ENCODE measurements at regions of chr11 and their contacts with region 1.

Region 1: DNA sequence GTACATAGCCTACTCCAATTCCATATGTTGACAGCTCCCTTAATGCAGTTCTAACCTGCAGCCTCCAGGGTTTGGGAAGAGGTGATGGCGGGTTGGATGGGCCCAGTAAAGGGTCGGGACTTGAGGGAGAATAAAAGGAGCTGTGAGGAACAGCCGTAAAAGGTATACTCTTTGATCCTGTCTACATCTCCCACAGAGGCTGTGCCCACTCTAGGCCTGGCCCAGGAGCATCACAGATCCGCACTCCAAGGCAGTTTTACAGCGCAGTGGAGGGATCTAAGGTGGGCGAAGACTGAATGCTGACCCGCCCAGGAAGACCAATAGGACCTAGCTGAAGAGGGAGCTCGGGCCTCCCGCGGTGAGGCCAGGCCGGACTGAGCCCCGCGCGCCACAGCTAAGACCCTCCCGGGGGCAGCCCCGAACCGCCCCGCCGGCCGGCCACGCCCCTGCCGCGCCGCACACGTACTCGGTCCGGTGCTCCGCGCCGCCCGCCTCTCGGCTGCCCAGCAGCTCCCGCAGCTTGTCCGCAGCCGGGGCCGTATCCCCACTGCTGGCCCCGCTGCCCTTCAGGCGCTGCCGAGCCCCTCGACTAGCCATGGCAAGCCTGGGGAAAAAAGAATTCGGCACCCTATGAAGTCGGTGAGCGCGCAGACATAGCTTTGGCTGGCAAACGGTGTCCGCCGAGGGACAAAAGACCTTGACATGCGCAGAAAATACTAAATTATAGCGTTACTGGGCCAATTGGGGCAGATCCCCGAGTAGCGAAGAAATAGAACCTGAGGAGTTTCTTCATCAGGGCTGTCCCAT is at the start of gene ALG9:
- DNase-seq: peak; percentile 94
- ATAC-seq: peak; percentile 87
- H3K4me3 Mint-ChIP-seq: peak within 1 kb of the TSS; percentile 95
- H3K27ac Mint-ChIP-seq: peak within 1 kb of the TSS; percentile 90
- H3K4me1 Mint-ChIP-seq: peaks cover 26% of the 10 kb centered on the region
- H3K27me3 Mint-ChIP-seq: no peaks in the 10 kb centered on the region
- total RNA-seq, gene ALG9: 30.4 to 41.2 TPM

Region 2: GRCh38 chr11:111766093-111766833 is 104.8 kb before region 1 on chr11 and contains the start of gene PPP2R1B:
- CTCF ChIA-PET with region 1: interaction called, 7 read pairs
- POLR2A ChIA-PET with region 1: interaction called, 3 read pairs
- intact Hi-C with region 1: loop called in 1 of 2 experiments (anchors 1 kb)
- DNase-seq: peak; percentile 85
- ATAC-seq: peak; percentile 95
- H3K4me3 Mint-ChIP-seq: peak within 1 kb of the TSS; percentile 85
- H3K27ac Mint-ChIP-seq: peak within 1 kb of the TSS; percentile 98
- H3K4me1 Mint-ChIP-seq: peaks cover 32% of the 10 kb centered on the region
- H3K27me3 Mint-ChIP-seq: no peaks in the 10 kb centered on the region
- total RNA-seq, gene PPP2R1B: 39.1 to 53.9 TPM

Region 3: DNA sequence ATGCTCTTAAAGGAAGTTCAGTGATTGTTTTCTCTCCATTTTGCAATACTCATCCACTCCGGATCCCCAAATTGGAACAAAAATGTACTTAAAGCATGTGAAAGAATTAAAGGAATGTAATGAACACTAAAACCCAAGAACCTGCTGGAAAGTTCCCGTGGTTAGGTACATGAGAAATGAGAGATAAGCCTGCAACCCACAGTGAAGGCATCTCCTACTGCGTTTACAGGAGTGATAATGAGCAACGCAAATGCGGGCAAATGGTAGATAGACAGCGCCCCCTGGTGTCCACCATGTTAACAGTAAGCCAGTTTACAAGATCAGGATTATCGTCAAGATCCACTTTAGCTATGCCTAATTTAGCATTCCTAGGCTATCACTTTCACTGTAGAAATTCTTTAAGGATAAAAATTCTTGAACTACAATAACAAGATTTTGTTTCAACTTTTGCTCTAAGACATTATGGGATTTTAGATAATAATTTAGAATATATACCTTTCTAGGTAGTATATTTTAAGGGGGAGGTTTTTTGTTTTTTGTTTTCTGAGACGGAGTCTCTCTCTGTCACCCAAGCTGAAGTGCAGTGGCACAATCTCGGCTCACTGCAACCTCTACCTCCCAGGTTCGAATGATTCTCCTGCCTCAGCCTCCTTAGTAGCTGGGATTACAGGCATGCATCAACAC is 29.6 kb before region 1 on chr11:
- CTCF ChIA-PET with region 1: interaction called, 19 read pairs
- POLR2A ChIA-PET with region 1: no interaction called
- intact Hi-C with region 1: no loop called
- DNase-seq: peak; percentile 94
- ATAC-seq: peak; percentile 95
- H3K4me3 Mint-ChIP-seq: no peak overlapping the region
- H3K27ac Mint-ChIP-seq: no peak overlapping the region
- H3K4me1 Mint-ChIP-seq: peaks cover 9% of the 10 kb centered on the region
- H3K27me3 Mint-ChIP-seq: no peaks in the 10 kb centered on the region

Region 4: GRCh38 chr11:111982019-111982464 is 111.0 kb after region 1 on chr11:
- CTCF ChIA-PET with region 1: interaction called, 11 read pairs
- POLR2A ChIA-PET with region 1: no interaction called
- intact Hi-C with region 1: loop called in 1 of 2 experiments (anchors 5 kb)
- DNase-seq: peak; percentile 78
- ATAC-seq: peak; percentile 88
- H3K4me3 Mint-ChIP-seq: no peak overlapping the region
- H3K27ac Mint-ChIP-seq: no peak overlapping the region
- H3K4me1 Mint-ChIP-seq: peaks cover 7% of the 10 kb centered on the region
- H3K27me3 Mint-ChIP-seq: peaks cover 22% of the 10 kb centered on the region

Region 5: GRCh38 chr11:112024773-112025678 is 153.9 kb after region 1 on chr11 and contains the start of gene DLAT:
- CTCF ChIA-PET with region 1: no interaction called
- POLR2A ChIA-PET with region 1: interaction called, 3 read pairs
- intact Hi-C with region 1: loop called (anchors 1 to 2 kb)
- DNase-seq: peak; percentile 93
- ATAC-seq: peak; percentile 90
- H3K4me3 Mint-ChIP-seq: peak within 1 kb of the TSS; percentile 96
- H3K27ac Mint-ChIP-seq: peak within 1 kb of the TSS; percentile 100
- H3K4me1 Mint-ChIP-seq: peaks cover 19% of the 10 kb centered on the region
- H3K27me3 Mint-ChIP-seq: no peaks in the 10 kb centered on the region
- total RNA-seq, gene DLAT: 47.8 to 49.1 TPM

Region 6: DNA sequence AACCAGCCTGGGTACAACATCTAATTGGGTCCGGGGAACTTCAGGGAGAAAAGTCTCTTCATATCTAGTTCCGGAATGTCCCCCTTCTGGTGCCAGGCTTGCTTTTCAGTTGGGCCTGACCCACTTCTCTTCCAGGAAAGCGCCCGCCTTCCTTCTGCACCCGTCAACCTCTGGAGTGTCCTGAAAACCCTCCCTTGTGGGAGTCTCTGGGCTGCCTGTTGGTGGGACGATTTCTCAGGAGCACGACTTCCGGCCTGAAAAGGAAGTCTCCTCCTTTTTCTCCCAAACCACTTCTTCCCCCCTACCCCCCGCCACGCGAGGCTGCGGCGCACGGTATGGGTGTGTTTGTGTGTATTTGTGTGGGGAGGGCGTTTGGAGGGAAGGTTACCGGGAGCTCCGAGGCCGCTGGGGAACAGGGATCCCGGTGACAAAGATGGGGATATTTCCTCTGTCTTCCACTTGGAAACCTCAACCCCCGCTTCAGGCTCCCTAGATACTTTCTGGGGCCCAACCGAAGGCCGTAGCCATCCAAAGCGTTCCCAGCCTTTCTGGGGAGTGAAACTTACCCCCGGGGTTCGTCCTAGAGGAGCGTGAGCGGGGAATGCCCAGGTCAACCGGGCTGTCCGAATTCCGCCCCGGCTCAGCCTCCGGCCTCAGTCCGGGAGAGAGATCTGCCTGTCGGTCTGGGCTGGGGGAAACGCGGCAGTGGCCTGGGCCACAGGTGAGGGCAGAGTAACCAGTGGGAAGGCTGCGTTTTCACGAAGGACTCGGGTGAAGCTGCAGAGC is 203.1 kb after region 1 on chr11 and contains the start of gene NKAPD1:
- CTCF ChIA-PET with region 1: interaction called, 6 read pairs
- POLR2A ChIA-PET with region 1: no interaction called
- intact Hi-C with region 1: loop called (anchors 1 to 2 kb)
- DNase-seq: peak; percentile 86
- ATAC-seq: peak; percentile 92
- H3K4me3 Mint-ChIP-seq: peak within 1 kb of the TSS; percentile 94
- H3K27ac Mint-ChIP-seq: peak within 1 kb of the TSS; percentile 93
- H3K4me1 Mint-ChIP-seq: peaks cover 26% of the 10 kb centered on the region
- H3K27me3 Mint-ChIP-seq: peaks cover 11% of the 10 kb centered on the region
- total RNA-seq, gene NKAPD1: 23.7 to 45.3 TPM

Region 7: DNA sequence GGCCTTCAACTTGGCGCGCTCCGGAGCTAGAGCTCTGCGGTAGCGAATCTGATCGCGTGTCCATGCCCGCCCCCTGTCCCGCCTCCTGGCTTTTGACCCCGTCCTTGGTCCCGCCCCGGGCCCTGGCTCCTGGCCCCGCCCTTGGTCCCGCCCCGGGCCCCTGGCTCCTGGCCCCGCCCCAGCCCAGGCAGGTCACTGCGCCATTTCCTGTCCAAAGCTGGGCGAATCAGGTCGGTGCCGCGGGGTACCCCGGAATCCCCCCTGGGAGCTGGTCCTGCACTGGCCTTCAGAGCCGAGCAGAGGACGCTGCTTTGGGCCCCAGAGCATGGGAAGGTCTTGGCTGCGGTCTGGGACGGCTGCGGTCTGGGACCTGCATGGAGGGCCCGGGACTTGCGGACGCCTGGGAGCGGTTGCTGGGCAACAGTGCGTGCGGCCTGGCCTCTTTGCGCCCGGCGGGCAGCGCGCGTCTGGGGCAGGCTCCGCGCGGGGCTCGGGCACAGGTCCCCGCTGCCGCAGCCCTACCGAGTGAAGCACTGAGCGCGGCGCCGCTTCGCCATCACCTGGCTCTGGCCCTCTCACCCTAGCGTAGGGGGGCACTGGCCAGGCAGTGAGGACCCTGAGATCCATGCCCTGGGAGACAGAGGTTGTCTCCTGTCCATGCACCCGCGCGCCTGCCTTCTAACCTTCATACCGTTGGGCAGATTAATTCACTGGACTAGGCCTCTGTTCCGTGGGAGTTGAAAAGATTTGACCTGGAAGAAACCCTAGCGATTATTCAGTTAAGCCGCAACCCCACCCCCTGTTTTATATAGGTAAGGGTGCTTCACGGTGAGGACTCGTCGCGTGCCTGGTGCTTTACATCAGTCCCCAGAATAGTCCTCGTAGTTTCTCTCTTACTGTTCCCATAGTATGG is 1443.6 kb after region 1 on chr11 and contains the start of gene TTC12:
- CTCF ChIA-PET with region 1: no interaction called
- POLR2A ChIA-PET with region 1: no interaction called
- intact Hi-C with region 1: loop called in 1 of 2 experiments (anchors 5 kb)
- DNase-seq: peak; percentile 97
- ATAC-seq: peak; percentile 99
- H3K4me3 Mint-ChIP-seq: peak within 1 kb of the TSS; percentile 77
- H3K27ac Mint-ChIP-seq: peak within 1 kb of the TSS; percentile 82
- H3K4me1 Mint-ChIP-seq: peaks cover 24% of the 10 kb centered on the region
- H3K27me3 Mint-ChIP-seq: no peaks in the 10 kb centered on the region
- total RNA-seq, gene TTC12: 16.3 to 17.6 TPM